ENCODE measurements at regions of chr11 and their contacts with region 1.

Region 1: DNA sequence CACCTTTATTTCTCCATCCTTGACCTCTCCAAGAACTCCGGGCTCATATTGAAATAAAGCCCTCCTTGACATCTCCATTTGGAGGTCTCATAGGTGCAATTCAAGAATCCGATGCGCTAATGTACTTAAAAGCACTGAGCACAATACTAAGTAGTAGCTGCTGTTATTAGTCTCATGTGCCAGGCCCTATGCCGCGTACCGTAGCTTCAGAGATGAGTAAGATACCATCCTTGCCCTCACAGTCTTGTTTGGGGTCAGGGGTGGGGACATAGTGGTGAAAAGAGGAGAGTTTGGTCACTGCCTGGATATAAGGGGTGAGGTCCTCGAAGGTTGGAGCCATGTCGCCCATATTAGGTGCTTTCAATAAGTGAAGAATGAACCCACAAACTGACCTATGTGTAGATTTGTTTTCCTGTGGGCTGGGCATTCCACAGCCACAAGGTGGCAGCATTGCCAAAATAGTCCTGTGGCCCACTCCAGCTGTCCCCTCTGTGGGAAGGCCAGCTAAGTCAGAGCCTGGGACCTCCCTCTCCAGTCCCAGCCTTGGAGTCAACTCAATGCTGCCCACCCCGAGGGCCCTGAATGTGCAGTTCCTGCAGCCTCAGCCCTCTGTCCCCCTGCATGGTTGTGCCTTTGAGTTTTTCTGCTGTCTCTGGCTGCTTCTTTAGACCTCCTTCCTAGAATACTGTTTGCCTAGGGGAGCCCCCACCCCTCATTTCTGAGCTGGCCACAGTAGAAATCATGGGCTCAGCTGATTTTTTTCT is 6.5 kb downstream of the DCPS start:
- DNase-seq: peak; percentile 47 to 82
- H3K4me3 ChIP-seq: no peak overlapping the region
- H3K27ac ChIP-seq: no peak overlapping the region
- H3K4me1 ChIP-seq: no peaks in the 10 kb centered on the region
- H3K27me3 ChIP-seq: no peaks in the 10 kb centered on the region
- CTCF ChIP-seq: peak; percentile 78 to 88 (median 85)
- EP300 ChIP-seq: no peak
- POLR2A ChIP-seq: no peak
- RAD21 ChIP-seq: peak; percentile 92 to 93

Region 2: DNA sequence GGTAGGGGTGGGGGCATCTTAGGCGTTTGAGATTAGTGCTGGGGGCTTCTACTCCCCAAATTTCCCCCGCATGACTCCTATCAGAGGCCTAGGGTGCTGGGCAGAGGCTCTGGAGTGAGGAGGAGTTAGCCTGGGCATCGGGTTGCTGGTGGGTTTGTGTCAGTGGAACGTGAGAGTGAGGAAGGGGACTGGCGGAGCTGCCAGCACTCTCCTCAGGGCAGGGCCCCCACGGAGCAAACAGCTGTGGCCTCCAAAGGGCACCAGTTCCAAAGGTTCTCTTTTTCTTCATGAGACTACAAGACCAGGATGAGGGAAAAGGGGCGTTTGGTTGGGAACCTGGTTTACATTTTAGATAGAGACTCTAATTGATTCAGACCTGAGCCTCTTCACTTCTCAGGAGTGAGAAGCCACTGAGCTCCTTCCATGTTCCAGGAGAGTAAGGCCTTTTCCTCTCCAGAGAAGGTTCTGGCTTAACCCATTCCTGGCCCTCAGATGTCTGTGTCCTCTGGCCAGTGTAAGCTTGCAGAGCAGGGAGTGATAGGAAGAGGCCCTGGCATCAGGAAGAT is 212.1 kb before region 1 on chr11:
- CTCF ChIA-PET with region 1: no interaction called
- POLR2A ChIA-PET with region 1: no interaction called
- DNase-seq: no peak
- H3K4me3 ChIP-seq: no peak overlapping the region
- H3K27ac ChIP-seq: no peak overlapping the region
- H3K4me1 ChIP-seq: peaks cover 2 to 11% (median 3%) of the 10 kb centered on the region in 4 experiments; a peak in 5 of 7 replicates
- H3K27me3 ChIP-seq: no peaks in the 10 kb centered on the region
- CTCF ChIP-seq: no peak
- EP300 ChIP-seq: no peak
- POLR2A ChIP-seq: no peak
- RAD21 ChIP-seq: no peak

Region 3: GRCh38 chr11:126341760-126342161 is 31.4 kb after region 1 on chr11:
- CTCF ChIA-PET with region 1: interaction called, 17 read pairs
- POLR2A ChIA-PET with region 1: interaction called, 5 read pairs
- DNase-seq: no peak
- H3K4me3 ChIP-seq: no peak overlapping the region
- H3K27ac ChIP-seq: no peak overlapping the region
- H3K4me1 ChIP-seq: peaks cover 0 to 14% (median 7%) of the 10 kb centered on the region in 4 experiments; a peak in 4 of 7 replicates
- H3K27me3 ChIP-seq: no peaks in the 10 kb centered on the region
- CTCF ChIP-seq: no peak
- EP300 ChIP-seq: no peak
- POLR2A ChIP-seq: no peak
- RAD21 ChIP-seq: no peak

Region 4: GRCh38 chr11:126391970-126392639 is 81.7 kb after region 1 on chr11:
- CTCF ChIA-PET with region 1: interaction called, 22 read pairs
- POLR2A ChIA-PET with region 1: no interaction called
- DNase-seq: no peak
- H3K4me3 ChIP-seq: no peak overlapping the region
- H3K27ac ChIP-seq: no peak overlapping the region
- H3K4me1 ChIP-seq: peaks cover 0 to 3% (median 0%) of the 10 kb centered on the region in 4 experiments; a peak in 3 of 7 replicates
- H3K27me3 ChIP-seq: no peaks in the 10 kb centered on the region
- CTCF ChIP-seq: peak; percentile 60 to 67 (median 64)
- EP300 ChIP-seq: no peak
- POLR2A ChIP-seq: no peak
- RAD21 ChIP-seq: peak; percentile 63 to 69

Region 5: GRCh38 chr11:126416542-126417090 is 106.2 kb after region 1 on chr11:
- CTCF ChIA-PET with region 1: interaction called, 11 read pairs
- POLR2A ChIA-PET with region 1: interaction called, 7 read pairs
- DNase-seq: peak in 1 of 2 experiments; percentile 63
- H3K4me3 ChIP-seq: peak overlapping the region; percentile 32 to 57 (median 40)
- H3K27ac ChIP-seq: no peak overlapping the region
- H3K4me1 ChIP-seq: no peaks in the 10 kb centered on the region; a peak in 1 of 7 replicates
- H3K27me3 ChIP-seq: peaks cover 0 to 5% (median 0%) of the 10 kb centered on the region in 4 experiments; a peak in 3 of 7 replicates
- CTCF ChIP-seq: no peak
- EP300 ChIP-seq: no peak
- POLR2A ChIP-seq: peak in 1 of 2 experiments; percentile 43; a peak in 1 of 3 replicates
- RAD21 ChIP-seq: no peak

Region 6: DNA sequence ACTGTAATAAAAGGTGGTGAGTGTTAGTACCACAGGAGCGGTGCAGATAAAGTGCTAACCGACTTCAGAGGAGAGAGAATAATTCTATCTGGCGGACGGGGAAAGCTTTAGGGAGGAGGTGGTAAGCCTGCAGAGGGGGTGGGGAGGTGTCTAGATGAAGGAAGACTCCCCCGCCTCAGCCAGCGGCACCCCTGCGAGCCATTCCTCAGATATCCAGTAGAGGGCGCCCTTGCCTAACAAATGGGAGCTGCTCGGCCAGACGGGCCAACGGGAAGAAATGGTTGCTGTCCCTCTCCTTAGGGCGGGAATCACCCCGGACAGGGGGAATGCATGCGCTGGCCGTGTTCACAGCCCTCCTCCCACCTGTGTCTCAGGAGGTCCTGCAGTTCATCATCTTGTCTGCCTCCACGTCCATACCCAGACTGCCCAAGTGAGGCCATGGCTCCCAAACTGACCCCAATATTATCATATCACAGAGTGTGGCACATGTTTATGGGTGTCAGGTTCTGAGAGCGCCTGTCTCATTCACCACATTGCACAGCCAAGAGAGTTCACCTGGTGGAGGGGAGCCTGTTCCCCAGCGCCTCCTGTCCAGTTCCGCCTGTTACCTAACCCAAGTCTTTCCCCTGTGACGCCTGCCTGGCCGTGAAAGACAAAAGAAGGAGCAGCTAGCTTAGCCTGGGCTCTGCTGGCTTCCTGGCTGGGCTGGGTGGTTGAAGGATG is 130.5 kb after region 1 on chr11:
- CTCF ChIA-PET with region 1: interaction called, 31 read pairs
- POLR2A ChIA-PET with region 1: no interaction called
- DNase-seq: peak; percentile 64 to 98
- H3K4me3 ChIP-seq: peak overlapping the region in 1 of 4 experiments; percentile 13; a peak in 1 of 8 replicates
- H3K27ac ChIP-seq: no peak overlapping the region
- H3K4me1 ChIP-seq: peaks cover 4 to 11% (median 8%) of the 10 kb centered on the region in 4 experiments; a peak in 5 of 7 replicates
- H3K27me3 ChIP-seq: no peaks in the 10 kb centered on the region
- CTCF ChIP-seq: peak; percentile 91 to 96 (median 93)
- EP300 ChIP-seq: no peak
- POLR2A ChIP-seq: no peak
- RAD21 ChIP-seq: peak; percentile 100

Measured in H1 (cell line).